HEK293 (cell line): ENCODE measurements at regions of chr12 and their contacts with region 1.

Region 1: GRCh38 chr12:54701940-54702592 is 53.9 kb upstream of the DCD start:
- H3K4me3 ChIP-seq: no peak overlapping the region
- H3K27ac ChIP-seq: no peak overlapping the region
- H3K4me1 ChIP-seq: no peaks in the 10 kb centered on the region
- CTCF ChIP-seq: no peak

Region 2: GRCh38 chr12:54689984-54690383 is 12.1 kb before region 1 on chr12:
- CTCF ChIA-PET with region 1: interaction called, 37 read pairs
- POLR2A ChIA-PET with region 1: no interaction called
- H3K4me3 ChIP-seq: no peak overlapping the region
- H3K27ac ChIP-seq: no peak overlapping the region
- H3K4me1 ChIP-seq: no peaks in the 10 kb centered on the region
- CTCF ChIP-seq: peak; percentile 32; the same call in 1 of the 2 replicates

Region 3: GRCh38 chr12:54716261-54716660 is 14.2 kb after region 1 on chr12:
- CTCF ChIA-PET with region 1: interaction called, 13 read pairs
- POLR2A ChIA-PET with region 1: no interaction called
- H3K4me3 ChIP-seq: no peak overlapping the region
- H3K27ac ChIP-seq: no peak overlapping the region
- H3K4me1 ChIP-seq: no peaks in the 10 kb centered on the region
- CTCF ChIP-seq: no peak

Region 4: GRCh38 chr12:54749191-54749818 is 47.2 kb after region 1 on chr12:
- CTCF ChIA-PET with region 1: interaction called, 25 read pairs
- POLR2A ChIA-PET with region 1: no interaction called
- H3K4me3 ChIP-seq: no peak overlapping the region
- H3K27ac ChIP-seq: no peak overlapping the region
- H3K4me1 ChIP-seq: no peaks in the 10 kb centered on the region
- CTCF ChIP-seq: peak; percentile 45; the same call in 1 of the 2 replicates

Region 5: GRCh38 chr12:55073043-55074022 is 371.3 kb after region 1 on chr12:
- CTCF ChIA-PET with region 1: interaction called, 10 read pairs
- POLR2A ChIA-PET with region 1: no interaction called
- H3K4me3 ChIP-seq: no peak overlapping the region
- H3K27ac ChIP-seq: no peak overlapping the region
- H3K4me1 ChIP-seq: no peaks in the 10 kb centered on the region
- CTCF ChIP-seq: peak; percentile 47